ENCODE measurements at regions of chr12 and their contacts with region 1.

Region 1: DNA sequence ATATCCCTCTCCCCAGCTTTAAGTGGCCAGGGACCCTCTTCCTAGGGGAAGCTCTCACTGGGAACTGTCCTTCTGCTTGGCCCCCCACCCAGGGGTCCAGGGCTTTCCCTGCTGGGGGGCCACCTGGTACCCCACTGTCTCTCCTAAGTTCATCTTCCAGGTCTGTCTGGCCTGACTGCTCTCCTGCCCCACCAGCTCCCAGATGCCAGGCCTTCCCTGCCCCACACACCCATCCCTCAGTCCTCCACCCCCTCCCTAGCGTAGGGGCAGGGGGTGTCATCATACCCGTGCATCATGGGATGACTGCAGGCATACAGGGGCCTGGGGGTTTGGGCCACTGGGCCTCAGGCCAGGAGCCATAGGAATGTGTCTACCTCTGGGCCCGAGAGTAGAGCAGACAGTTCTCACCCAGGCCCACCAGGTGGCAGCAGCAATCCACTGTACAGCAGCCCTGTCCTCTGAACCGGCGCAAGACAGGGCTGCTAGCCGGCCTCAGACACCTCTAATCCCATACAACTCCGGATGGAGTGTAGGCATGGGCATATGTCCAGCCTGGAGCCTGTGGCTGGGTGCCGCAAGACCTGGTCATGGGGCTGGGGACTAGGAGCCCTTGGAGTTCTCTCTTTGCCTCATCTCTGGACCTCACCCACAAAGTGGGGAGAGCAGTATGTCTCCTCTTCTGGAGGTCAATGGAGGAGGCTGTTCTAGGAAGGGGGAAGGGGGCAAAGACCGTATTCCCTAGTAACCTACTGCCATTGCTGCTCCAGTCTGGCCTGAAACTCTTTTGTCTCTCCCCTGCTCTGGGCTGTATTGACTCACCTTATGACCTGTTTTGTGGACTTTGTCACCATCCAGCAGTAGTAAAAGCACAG is 10.0 kb upstream of the SMARCD1 start:
- DNase-seq: peak; percentile 60 to 85 (median 71)
- H3K4me3 ChIP-seq: no peak overlapping the region
- H3K4me3 Mint-ChIP-seq: no peak overlapping the region
- H3K27ac ChIP-seq: no peak overlapping the region
- H3K27ac Mint-ChIP-seq: peak overlapping the region in 3 of 8 donors; percentile 11 to 74 (median 39)
- H3K4me1 ChIP-seq: peaks cover 4% of the 10 kb centered on the region
- H3K4me1 Mint-ChIP-seq: peaks cover 5 to 9% (median 5%) of the 10 kb centered on the region in 3 donors
- H3K27me3 ChIP-seq: no peaks in the 10 kb centered on the region
- H3K27me3 Mint-ChIP-seq: peaks cover 3 to 8% of the 10 kb centered on the region in 2 donors

Region 2: GRCh38 chr12:50043854-50044253 is 31.3 kb before region 1 on chr12:
- CTCF ChIA-PET with region 1: interaction called, 69 read pairs
- POLR2A ChIA-PET with region 1: no interaction called
- DNase-seq: no peak
- H3K4me3 ChIP-seq: no peak overlapping the region
- H3K4me3 Mint-ChIP-seq: no peak overlapping the region
- H3K27ac ChIP-seq: no peak overlapping the region
- H3K27ac Mint-ChIP-seq: no peak overlapping the region
- H3K4me1 ChIP-seq: no peaks in the 10 kb centered on the region
- H3K4me1 Mint-ChIP-seq: no peaks in the 10 kb centered on the region
- H3K27me3 ChIP-seq: no peaks in the 10 kb centered on the region
- H3K27me3 Mint-ChIP-seq: peaks cover 5% of the 10 kb centered on the region in 2 donors

Region 3: GRCh38 chr12:50174971-50175715 is 100.0 kb after region 1 on chr12:
- CTCF ChIA-PET with region 1: interaction called, 57 read pairs
- POLR2A ChIA-PET with region 1: no interaction called
- DNase-seq: peak in 2 of 5 donors; percentile 48 to 54
- H3K4me3 ChIP-seq: no peak overlapping the region
- H3K4me3 Mint-ChIP-seq: no peak overlapping the region
- H3K27ac ChIP-seq: no peak overlapping the region
- H3K27ac Mint-ChIP-seq: peak overlapping the region in 1 of 8 donors; percentile 53
- H3K4me1 ChIP-seq: no peaks in the 10 kb centered on the region
- H3K4me1 Mint-ChIP-seq: no peaks in the 10 kb centered on the region
- H3K27me3 ChIP-seq: no peaks in the 10 kb centered on the region
- H3K27me3 Mint-ChIP-seq: no peaks in the 10 kb centered on the region